ENCODE measurements at regions of chr2 and their contacts with region 1.

Region 1: GRCh38 chr2:54492335-54492734 is 36.2 kb downstream of the SPTBN1 start:
- DNase-seq: no peak
- ATAC-seq: no peak
- H3K4me3 ChIP-seq: no peak overlapping the region
- H3K27ac ChIP-seq: no peak overlapping the region
- H3K4me1 ChIP-seq: peaks cover 26% of the 10 kb centered on the region
- H3K27me3 ChIP-seq: no peaks in the 10 kb centered on the region
- CTCF ChIP-seq: no peak

Region 2: GRCh38 chr2:54471221-54471711 is 21.1 kb before region 1 on chr2:
- intact Hi-C with region 1: loop called in 1 of 2 experiments (anchors 1 kb)
- DNase-seq: no peak
- ATAC-seq: peak in 3 of 4 donors; percentile 18 to 74 (median 70)
- H3K4me3 ChIP-seq: no peak overlapping the region
- H3K27ac ChIP-seq: peak overlapping the region; percentile 74
- H3K4me1 ChIP-seq: peaks cover 60% of the 10 kb centered on the region
- H3K27me3 ChIP-seq: no peaks in the 10 kb centered on the region
- CTCF ChIP-seq: no peak

Measured in psoas muscle (tissue), 8 donors.